ENCODE measurements at regions of chr14 and their contacts with region 1.

Region 1: DNA sequence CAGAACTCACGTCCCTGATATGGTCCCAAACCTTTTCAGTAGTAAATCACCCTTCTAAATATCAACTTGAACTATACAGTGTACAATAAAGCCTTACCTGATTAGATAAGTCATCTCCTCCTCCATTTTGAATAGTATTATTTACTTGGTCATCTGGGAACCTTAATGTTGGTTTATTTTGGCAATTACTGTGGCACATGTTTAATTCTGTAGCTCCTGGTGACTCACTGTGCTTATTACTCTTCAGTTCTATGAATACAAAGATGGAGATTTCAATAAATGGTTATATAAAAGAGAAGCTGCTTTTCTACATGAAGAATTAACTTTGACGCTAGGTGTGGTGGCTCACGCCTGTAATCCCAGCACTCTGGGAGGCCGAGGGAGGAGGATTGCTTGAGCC is 25.4 kb downstream of the MIS18BP1 start:
- DNase-seq: no peak
- H3K4me3 ChIP-seq: no peak overlapping the region
- H3K27me3 ChIP-seq: no peaks in the 10 kb centered on the region
- CTCF ChIP-seq: no peak

Region 2: GRCh38 chr14:44886860-44887595 is 340.5 kb before region 1 on chr14:
- CTCF ChIA-PET with region 1: no interaction called
- POLR2A ChIA-PET with region 1: no interaction called
- DNase-seq: no peak
- H3K4me3 ChIP-seq: no peak overlapping the region
- H3K27me3 ChIP-seq: no peaks in the 10 kb centered on the region
- CTCF ChIP-seq: no peak

Region 3: GRCh38 chr14:45134051-45134958 is 93.3 kb before region 1 on chr14 and contains the start of gene FKBP3:
- CTCF ChIA-PET with region 1: no interaction called
- POLR2A ChIA-PET with region 1: no interaction called
- DNase-seq: peak; percentile 90
- H3K4me3 ChIP-seq: peak within 1 kb of the TSS; percentile 59
- H3K27me3 ChIP-seq: no peaks in the 10 kb centered on the region
- CTCF ChIP-seq: no peak
- polyA plus RNA-seq, gene FKBP3: 8.9 and 29.8 TPM in 2 replicates

Region 4: DNA sequence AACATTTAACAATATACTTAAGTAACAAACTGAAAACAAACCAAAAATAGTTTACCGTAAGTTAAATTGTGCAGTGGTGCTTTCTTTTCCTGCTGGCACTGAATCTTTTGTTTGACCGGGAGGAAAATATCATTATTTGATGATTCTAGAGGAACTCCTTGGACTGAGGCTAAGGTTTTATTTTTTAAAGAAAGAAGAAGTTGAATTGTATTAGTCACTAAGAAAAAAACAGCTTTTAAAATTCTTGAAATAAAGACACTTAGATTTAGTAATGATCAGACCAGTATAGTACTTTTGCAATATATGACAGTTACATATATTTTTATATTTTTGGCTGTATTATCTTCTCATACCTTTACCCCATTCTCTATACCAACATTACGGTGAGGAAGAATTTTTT is 15.1 kb after region 1 on chr14:
- CTCF ChIA-PET with region 1: interaction called, 3 read pairs
- POLR2A ChIA-PET with region 1: interaction called, 28 read pairs
- DNase-seq: no peak
- H3K4me3 ChIP-seq: no peak overlapping the region; the same call in 1 of the 2 replicates
- H3K27me3 ChIP-seq: no peaks in the 10 kb centered on the region
- CTCF ChIP-seq: no peak

Measured in BJ (cell line).